ENCODE measurements at regions of chr9 and their contacts with region 1.

Region 1: DNA sequence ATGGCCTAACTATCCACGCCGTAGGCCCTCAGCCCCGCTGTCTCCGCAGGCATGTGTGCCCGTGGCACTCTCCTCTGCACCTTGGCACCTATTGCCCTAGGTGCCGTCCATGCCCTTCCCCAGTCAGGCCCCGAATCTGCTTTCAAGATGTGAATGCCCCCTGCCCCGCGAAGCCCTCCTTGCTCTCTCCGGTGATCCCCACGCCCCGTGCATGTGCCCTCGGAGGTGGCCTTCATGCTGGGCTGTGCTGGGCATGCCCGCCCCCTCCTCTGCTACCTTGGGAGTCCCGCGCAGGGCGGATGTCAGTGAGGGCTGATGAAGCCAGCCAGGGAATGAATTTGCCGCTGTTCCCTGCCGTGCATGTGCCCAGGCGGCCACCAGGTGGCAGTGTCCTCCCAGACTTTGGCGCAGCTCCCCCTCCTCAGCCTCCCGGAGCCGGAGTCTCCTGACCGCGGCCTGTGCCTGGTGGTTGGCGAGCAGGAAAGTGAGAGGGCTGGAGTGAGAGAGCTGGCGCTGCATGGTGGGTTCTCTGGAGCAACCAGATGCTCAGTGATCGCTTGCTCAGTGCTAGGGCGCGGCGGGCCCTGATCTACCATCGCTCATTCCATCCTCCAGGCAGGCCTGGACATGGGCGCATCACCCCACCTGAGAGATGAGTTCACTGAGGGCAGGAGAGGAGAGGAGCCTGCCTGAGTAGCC is 112.9 kb upstream of the LMX1B start:
- DNase-seq: peak; percentile 83
- CTCF ChIP-seq: peak; percentile 92

Region 2: GRCh38 chr9:125407974-125408900 is 1092.6 kb before region 1 on chr9:
- CTCF ChIA-PET with region 1: interaction called, 13 read pairs
- POLR2A ChIA-PET with region 1: no interaction called
- DNase-seq: peak; percentile 92
- CTCF ChIP-seq: peak; percentile 88

Region 3: GRCh38 chr9:126514047-126514821 is 13.4 kb after region 1 on chr9:
- CTCF ChIA-PET with region 1: interaction called, 60 read pairs
- POLR2A ChIA-PET with region 1: no interaction called
- DNase-seq: peak; percentile 71
- CTCF ChIP-seq: no peak

Region 4: DNA sequence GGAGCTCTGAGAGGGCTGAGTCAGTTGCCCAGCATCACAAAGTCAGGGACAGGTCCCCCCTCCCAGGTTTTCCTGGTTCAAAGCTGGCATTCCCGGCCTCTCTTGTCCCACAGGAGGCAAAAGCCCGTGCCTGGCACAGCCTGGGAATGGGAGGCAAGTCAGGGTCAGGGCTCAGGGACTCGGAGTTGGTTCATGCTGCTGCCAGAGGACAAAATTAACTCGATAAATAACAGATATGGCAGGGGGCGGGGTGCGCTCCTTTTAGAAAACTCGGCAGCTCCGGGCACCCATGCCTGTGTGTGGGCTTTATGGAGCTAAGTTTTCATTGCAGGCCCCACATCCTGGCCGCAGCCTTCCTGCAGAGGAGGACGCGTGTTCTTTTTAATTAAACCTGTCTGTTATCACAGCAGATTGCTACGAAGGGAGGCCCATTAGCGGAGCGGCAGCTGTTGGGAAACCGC is 50.1 kb after region 1 on chr9:
- CTCF ChIA-PET with region 1: interaction called, 193 read pairs
- POLR2A ChIA-PET with region 1: no interaction called
- DNase-seq: no peak
- CTCF ChIP-seq: no peak

Region 5: DNA sequence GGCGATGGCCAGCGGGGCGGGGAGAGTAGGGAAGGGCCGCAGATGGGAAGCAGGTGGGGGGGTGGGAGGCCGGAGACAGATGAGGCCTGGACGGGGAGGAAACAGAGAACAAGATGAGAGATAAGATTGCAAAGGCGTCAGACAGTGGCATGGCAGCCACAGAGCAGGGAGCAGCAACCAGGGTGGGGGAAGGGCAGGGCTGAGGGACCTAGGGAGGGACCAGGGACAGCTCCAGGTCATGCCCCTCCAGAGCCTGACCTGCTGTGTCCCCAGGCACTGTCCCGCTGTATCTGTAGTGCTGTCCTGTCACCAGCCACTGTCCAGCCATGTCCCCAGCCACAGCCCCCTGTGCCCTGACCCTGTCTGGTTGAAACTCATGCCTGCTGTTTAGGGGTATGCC is 63.3 kb after region 1 on chr9:
- CTCF ChIA-PET with region 1: interaction called, 193 read pairs
- POLR2A ChIA-PET with region 1: no interaction called
- DNase-seq: no peak
- CTCF ChIP-seq: no peak